Activated T-helper 2 cell treated with anti-CD3 and anti-CD28 coated beads, Interferon-gamma antibody, Interleukin-2, Interleukin-4, amounts not matched to agents 10 μg/mL and 5 μg/mL and 100 μg/mL, durations not matched to agents 14 hours and 24 hours and 36 hours (primary cell): ENCODE measurements at regions of chr1 and their contacts with region 1.

Region 1: DNA sequence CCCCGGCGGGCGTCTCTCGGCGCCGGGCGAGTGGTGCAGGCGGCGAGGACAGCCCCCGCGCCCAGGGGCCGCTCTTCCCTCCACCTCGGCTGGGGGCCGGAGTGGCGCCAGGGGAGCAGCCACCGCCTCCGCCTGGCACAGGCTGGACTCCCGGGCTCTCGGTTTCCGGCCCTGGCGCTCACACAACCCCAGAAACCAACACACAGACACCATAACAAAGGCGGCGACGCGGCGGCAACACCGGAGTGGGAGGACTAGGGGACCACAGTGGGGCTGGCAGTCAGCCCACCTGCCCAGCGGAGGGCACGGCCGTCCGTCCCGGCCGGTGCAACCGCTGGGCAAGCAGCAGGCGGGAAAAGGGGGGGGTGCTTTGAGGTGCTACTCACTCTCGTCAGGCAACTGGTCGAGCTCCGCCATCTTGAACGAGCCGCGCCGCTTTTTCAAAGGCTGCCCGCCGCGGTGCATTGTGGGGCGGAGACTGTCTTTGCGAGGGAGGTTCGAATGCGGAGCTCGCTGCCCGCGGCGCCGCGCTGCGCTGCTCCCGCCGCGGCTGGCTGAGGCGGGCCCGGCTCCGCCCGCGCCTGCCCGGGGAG is at the start of gene LIN9:
- DNase-seq: peak; percentile 89
- H3K4me3 Mint-ChIP-seq: peak within 1 kb of the TSS; percentile 89
- H3K27ac Mint-ChIP-seq: peak within 1 kb of the TSS; percentile 80
- H3K4me1 Mint-ChIP-seq: peaks cover 26% of the 10 kb centered on the region
- H3K27me3 Mint-ChIP-seq: peaks cover 18% of the 10 kb centered on the region
- total RNA-seq, gene LIN9: 9.7 and 12.7 TPM in 2 replicates

Region 2: DNA sequence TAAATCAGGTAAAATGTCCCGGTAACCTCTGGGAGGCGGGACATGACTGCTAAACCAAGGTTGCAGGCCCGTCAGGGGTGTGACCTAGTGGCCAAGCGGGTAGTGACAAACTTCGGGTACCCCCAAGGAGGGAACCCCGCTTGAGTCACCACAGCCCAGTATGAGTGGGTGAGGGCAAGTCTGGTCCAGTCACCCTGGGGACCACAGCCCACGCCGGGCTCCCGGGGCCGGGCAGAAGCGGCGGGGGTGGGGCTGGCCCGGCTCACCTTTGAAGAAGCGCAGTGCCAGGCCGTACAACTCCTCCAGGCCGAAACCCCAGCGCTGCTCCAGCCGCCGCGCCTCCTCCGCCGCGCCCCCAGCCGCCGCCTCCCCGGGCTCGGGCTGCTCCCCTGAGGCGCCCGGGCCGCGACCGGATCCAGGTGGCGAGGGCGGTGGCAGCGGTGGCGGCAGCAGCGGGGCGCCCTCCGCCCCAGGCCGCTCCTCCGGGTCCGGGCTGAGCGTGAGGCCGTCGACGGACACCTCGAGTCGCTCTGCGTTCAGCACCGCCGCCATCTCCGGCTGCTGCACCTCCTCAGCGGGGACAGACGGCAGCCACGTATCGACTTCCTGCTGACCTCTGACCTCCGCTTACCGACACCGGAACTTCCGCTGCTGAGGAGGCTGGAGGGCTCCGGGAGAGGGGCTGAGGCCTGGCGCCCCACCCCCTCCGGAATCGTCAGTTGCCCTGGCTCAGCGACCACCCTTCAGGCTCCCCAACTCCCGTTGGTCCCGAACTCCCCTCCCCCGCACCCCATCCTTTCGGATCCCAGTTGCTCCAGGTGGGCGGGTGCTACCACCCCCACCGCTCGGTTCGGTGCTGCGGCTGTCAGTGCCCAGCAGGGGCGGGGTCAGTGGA is 122.4 kb before region 1 on chr1 and contains the start of gene ACBD3:
- intact Hi-C with region 1: loop called (anchors 5 kb)
- DNase-seq: peak; percentile 82
- H3K4me3 Mint-ChIP-seq: peak within 1 kb of the TSS; percentile 96
- H3K27ac Mint-ChIP-seq: peak within 1 kb of the TSS; percentile 92
- H3K4me1 Mint-ChIP-seq: peaks cover 22% of the 10 kb centered on the region
- H3K27me3 Mint-ChIP-seq: no peaks in the 10 kb centered on the region
- total RNA-seq, gene ACBD3: 24.3 and 25.4 TPM in 2 replicates

Region 3: DNA sequence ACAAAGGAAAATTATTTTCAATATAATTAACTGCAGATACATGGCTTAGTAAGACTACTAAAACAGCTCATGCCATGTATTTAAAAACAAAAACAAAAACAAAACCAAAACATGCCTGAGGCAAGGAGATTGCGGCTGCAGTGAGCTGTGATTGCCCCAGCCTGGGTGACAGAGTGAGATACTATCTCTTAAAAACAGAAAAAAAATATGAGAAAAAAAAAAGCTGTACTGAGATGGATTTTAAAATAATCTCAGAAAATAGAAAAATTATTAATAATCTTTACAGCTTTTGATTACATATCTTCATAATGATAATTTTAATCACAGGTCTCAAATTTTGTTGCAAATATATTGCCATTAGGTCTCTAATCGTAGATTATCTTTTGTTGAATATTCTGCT is 24.1 kb after region 1 on chr1:
- intact Hi-C with region 1: loop called (anchors 2 kb)
- DNase-seq: no peak
- H3K4me3 Mint-ChIP-seq: peak overlapping the region; percentile 11
- H3K27ac Mint-ChIP-seq: no peak overlapping the region
- H3K4me1 Mint-ChIP-seq: peaks cover 7% of the 10 kb centered on the region
- H3K27me3 Mint-ChIP-seq: no peaks in the 10 kb centered on the region

Region 4: GRCh38 chr1:226407497-226408284 is 98.9 kb after region 1 on chr1 and contains the start of gene PARP1:
- intact Hi-C with region 1: loop called (anchors 5 kb)
- DNase-seq: peak; percentile 90
- H3K4me3 Mint-ChIP-seq: peak within 1 kb of the TSS; percentile 93
- H3K27ac Mint-ChIP-seq: peak within 1 kb of the TSS; percentile 94
- H3K4me1 Mint-ChIP-seq: peaks cover 33% of the 10 kb centered on the region
- H3K27me3 Mint-ChIP-seq: no peaks in the 10 kb centered on the region
- total RNA-seq, gene PARP1: 194 and 197 TPM in 2 replicates